Activated CD4-positive, alpha-beta T cell treated with anti-CD3 and anti-CD28 coated beads, Interleukin-2, amount 10 ng/mL, durations not matched to agents 24 days and 14 days (primary cell): ENCODE measurements at regions of chr12 and their contacts with region 1.

Region 1: DNA sequence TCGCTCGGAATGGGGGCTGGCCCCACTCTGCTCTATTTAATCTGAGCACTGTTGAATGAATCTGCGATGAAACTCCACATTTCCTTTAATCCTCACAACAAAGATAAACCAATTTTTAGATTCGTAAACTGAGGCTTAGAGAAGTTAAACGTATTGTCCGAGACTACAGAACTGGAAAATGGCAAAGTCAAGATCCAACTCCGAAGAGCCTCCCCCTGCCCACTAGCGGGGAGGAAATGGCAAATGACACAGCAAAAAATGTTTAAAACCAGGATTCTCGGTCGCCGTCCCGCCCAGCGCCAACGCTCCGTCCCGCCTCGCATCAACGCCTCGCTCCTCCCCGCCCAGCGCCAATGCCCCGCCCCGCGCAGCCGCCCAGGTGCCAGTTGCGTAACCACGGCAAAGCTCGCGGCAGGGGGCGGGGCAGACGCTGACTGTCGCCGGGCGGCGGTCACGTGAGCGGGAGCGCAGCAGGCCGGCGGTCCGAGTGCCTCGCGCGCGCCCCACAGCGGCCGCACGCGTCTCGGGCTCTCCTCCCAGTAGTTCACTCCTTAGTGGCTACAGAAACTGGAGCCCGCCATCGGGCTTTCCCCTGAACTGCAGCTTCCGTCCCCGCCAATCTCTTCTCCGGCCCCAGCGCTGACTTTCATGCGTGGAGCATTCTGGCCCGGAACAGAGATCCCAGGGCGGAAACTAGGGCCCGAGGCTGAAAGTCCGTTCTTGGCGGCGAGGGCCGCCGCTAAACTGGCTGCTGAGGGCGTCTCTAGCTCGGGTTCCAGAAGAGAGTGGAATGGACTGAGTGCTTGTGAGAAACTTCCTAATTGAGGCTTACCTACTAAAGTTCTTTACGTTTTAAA is 13.6 kb upstream of the LRRC23 start:
- DNase-seq: peak; percentile 100
- H3K4me3 Mint-ChIP-seq: peak overlapping the region; percentile 83
- H3K27ac Mint-ChIP-seq: peak overlapping the region; percentile 97
- H3K4me1 Mint-ChIP-seq: peaks cover 21% of the 10 kb centered on the region
- H3K27me3 Mint-ChIP-seq: no peaks in the 10 kb centered on the region

Region 2: GRCh38 chr12:6904280-6905278 is 13.6 kb after region 1 on chr12 and contains the start of gene LRRC23:
- intact Hi-C with region 1: loop called (anchors 1 kb)
- DNase-seq: peak; percentile 100
- H3K4me3 Mint-ChIP-seq: no peak within 1 kb of the TSS
- H3K27ac Mint-ChIP-seq: peak within 1 kb of the TSS; percentile 17
- H3K4me1 Mint-ChIP-seq: peaks cover 6% of the 10 kb centered on the region
- H3K27me3 Mint-ChIP-seq: peaks cover 2% of the 10 kb centered on the region
- total RNA-seq, gene LRRC23: 6.3 and 6.6 TPM in 2 replicates

Region 3: GRCh38 chr12:6914246-6914946 is 23.4 kb after region 1 on chr12 and contains the start of gene ENO2:
- intact Hi-C with region 1: loop called (anchors 1 kb)
- DNase-seq: peak; percentile 94
- H3K4me3 Mint-ChIP-seq: peak within 1 kb of the TSS; percentile 99
- H3K27ac Mint-ChIP-seq: peak within 1 kb of the TSS; percentile 94
- H3K4me1 Mint-ChIP-seq: peaks cover 40% of the 10 kb centered on the region
- H3K27me3 Mint-ChIP-seq: no peaks in the 10 kb centered on the region
- total RNA-seq, gene ENO2: 202 and 206 TPM in 2 replicates